Activated CD8-positive, alpha-beta T cell treated with anti-CD3 and anti-CD28 coated beads, Interleukin-2, amount 10 ng/mL, durations not matched to agents 7 days and 5 days (primary cell): ENCODE measurements at regions of chr5 and their contacts with region 1.

Region 1: GRCh38 chr5:16666883-16667398 is 50.1 kb upstream of the RETREG1 start:
- DNase-seq: peak; percentile 33
- ATAC-seq: no peak
- H3K4me3 Mint-ChIP-seq: no peak overlapping the region
- H3K27ac Mint-ChIP-seq: no peak overlapping the region
- H3K4me1 Mint-ChIP-seq: peaks cover 3% of the 10 kb centered on the region
- H3K27me3 Mint-ChIP-seq: no peaks in the 10 kb centered on the region

Region 2: DNA sequence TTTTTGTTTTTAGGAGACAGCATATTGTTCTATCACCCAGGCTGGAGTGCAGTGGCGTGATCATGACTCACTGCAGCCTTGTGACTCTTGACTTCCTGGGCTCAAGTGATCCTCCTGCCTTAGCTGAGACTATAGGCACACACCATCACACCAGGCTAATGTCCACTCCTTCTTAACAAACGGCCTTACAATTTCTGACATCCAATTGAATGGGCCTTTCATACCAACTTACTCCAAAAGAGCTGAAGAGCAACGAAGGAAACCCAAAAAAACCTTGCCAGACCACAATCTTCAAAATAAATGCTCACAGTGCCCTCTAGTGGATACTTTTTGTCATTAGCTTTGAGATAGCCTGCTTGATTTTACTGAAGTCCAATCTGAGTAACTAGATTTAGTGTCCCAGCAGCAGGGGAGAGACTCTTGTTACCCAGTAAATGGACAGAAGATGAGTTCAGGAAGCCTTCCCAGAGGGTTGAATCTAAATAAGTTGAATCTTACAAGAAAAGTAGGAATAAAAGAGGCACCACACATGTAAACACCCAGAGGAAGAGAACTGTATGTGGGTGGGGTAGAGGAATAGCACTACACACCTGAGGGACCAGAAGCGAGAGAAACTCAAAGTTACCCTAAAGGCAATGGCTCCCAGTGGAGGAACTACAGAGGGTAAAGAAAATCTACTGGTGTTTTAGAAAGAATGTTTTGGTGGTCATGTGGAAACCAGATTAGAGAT is 210.7 kb before region 1 on chr5:
- CTCF ChIA-PET with region 1: interaction called, 14 read pairs
- POLR2A ChIA-PET with region 1: no interaction called
- DNase-seq: peak; percentile 54
- ATAC-seq: peak; percentile 77
- H3K4me3 Mint-ChIP-seq: no peak overlapping the region
- H3K27ac Mint-ChIP-seq: peak overlapping the region; percentile 51
- H3K4me1 Mint-ChIP-seq: peaks cover 37% of the 10 kb centered on the region
- H3K27me3 Mint-ChIP-seq: no peaks in the 10 kb centered on the region

Region 3: DNA sequence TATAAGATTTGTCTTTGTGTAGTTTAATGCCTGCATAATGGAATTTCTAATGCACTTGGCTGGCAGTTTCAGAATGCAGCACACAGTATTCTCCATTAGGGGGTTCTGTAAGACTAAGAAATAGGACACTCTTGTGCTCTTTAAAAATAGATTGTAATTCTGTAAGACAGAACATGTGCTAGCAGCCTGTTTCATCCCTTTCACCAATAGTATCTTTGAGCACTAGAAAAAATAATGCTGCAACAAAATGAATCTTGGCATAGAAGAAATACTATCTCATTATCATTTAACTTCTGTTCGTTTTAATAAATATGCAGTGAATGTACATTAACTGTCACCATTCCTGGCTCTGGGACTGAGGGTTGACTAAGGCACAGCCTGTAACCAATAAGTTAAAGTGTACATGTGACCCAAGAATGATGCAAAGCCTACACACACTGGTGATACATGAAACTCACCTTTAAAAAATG is 177.6 kb before region 1 on chr5:
- CTCF ChIA-PET with region 1: interaction called, 14 read pairs
- POLR2A ChIA-PET with region 1: no interaction called
- DNase-seq: no peak
- ATAC-seq: peak; percentile 60
- H3K4me3 Mint-ChIP-seq: no peak overlapping the region
- H3K27ac Mint-ChIP-seq: no peak overlapping the region
- H3K4me1 Mint-ChIP-seq: peaks cover 8% of the 10 kb centered on the region
- H3K27me3 Mint-ChIP-seq: no peaks in the 10 kb centered on the region

Region 4: DNA sequence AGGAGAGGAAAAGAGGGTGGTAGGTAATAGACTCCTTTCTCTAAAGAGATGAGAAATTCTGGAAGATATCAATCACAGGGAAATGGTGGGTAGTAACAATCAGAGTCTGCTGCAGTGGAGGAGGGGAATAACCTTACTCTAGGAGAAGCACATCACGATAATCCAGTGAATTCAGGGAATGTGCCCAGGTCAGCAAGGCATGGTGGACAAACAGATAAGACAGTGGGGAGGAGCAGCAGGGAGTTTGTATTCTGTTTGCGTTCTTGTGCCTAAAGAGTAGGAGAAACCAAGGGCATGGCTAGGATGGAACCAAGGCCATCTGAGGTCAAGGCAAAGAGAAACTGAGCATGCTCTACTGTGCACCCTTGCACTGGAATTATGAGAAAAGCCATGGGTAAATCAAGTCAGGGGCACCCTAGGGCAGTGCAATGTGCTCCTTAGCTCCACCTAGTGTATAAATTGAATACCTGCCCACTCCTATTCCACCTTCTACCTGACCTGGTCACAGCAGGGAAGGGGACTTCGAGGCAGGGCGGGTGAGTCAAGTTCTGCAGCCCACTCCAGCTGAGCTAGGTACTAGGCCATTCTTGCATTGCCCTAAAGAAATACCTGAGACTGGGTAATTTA is 81.8 kb before region 1 on chr5:
- CTCF ChIA-PET with region 1: interaction called, 17 read pairs
- POLR2A ChIA-PET with region 1: no interaction called
- DNase-seq: no peak
- ATAC-seq: peak; percentile 61
- H3K4me3 Mint-ChIP-seq: no peak overlapping the region
- H3K27ac Mint-ChIP-seq: no peak overlapping the region
- H3K4me1 Mint-ChIP-seq: peaks cover 7% of the 10 kb centered on the region
- H3K27me3 Mint-ChIP-seq: no peaks in the 10 kb centered on the region

Region 5: DNA sequence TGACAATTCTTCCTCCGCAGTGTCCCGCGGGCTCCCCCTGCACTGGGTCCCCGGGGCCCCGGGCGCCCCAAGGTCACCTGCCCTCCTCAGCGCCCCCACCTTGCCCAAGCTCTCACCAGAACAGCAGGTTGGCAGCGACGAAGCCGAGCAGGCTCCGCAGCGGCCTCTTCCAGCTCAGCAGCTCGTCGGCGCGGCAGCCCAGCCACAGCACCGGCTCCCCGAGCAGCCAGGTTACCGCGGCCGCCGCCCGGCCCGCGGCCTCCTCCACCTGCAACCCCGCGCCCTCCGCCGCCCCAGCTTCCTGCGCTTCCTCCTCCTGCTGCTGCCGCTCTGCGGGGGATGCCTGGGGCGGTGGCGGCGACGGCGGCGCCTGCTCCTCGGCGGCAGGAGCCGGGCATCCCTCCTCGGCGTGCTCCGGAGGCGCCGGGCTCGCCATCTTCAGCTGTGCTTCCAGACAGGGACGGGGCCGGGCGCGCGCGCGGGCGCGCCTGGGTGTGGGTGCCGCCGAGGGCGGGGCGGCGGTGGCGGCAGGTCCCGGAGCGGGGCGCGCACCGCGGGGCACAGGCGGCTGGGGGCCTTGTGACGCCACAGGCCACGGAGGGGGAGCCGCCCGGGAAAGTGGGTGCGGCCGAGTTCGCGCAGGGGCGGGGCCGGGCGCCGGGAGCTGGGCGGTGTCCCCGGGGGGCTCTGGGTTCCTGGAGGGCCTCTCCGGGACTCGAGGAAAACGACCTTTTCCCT is 50.2 kb before region 1 on chr5 and contains the start of gene RETREG1:
- CTCF ChIA-PET with region 1: interaction called, 10 read pairs
- POLR2A ChIA-PET with region 1: interaction called, 7 read pairs
- DNase-seq: peak; percentile 87
- ATAC-seq: peak; percentile 86
- H3K4me3 Mint-ChIP-seq: peak within 1 kb of the TSS; percentile 95
- H3K27ac Mint-ChIP-seq: no peak within 1 kb of the TSS
- H3K4me1 Mint-ChIP-seq: peaks cover 38% of the 10 kb centered on the region
- H3K27me3 Mint-ChIP-seq: no peaks in the 10 kb centered on the region
- total RNA-seq, gene RETREG1: 47.1 to 51.8 TPM

Region 6: GRCh38 chr5:16626663-16627264 is 40.2 kb before region 1 on chr5:
- CTCF ChIA-PET with region 1: interaction called, 18 read pairs
- POLR2A ChIA-PET with region 1: interaction called, 3 read pairs
- DNase-seq: peak; percentile 72
- ATAC-seq: peak; percentile 84
- H3K4me3 Mint-ChIP-seq: peak overlapping the region; percentile 58
- H3K27ac Mint-ChIP-seq: peak overlapping the region; percentile 96
- H3K4me1 Mint-ChIP-seq: peaks cover 55% of the 10 kb centered on the region
- H3K27me3 Mint-ChIP-seq: no peaks in the 10 kb centered on the region

Region 7: GRCh38 chr5:16656561-16657191 is 10.3 kb before region 1 on chr5:
- CTCF ChIA-PET with region 1: interaction called, 20 read pairs
- POLR2A ChIA-PET with region 1: no interaction called
- DNase-seq: no peak
- ATAC-seq: no peak
- H3K4me3 Mint-ChIP-seq: no peak overlapping the region
- H3K27ac Mint-ChIP-seq: no peak overlapping the region
- H3K4me1 Mint-ChIP-seq: no peaks in the 10 kb centered on the region
- H3K27me3 Mint-ChIP-seq: no peaks in the 10 kb centered on the region